CD4-positive, alpha-beta T cell (primary cell): ENCODE measurements at regions of chr7 and their contacts with region 1.

Region 1: DNA sequence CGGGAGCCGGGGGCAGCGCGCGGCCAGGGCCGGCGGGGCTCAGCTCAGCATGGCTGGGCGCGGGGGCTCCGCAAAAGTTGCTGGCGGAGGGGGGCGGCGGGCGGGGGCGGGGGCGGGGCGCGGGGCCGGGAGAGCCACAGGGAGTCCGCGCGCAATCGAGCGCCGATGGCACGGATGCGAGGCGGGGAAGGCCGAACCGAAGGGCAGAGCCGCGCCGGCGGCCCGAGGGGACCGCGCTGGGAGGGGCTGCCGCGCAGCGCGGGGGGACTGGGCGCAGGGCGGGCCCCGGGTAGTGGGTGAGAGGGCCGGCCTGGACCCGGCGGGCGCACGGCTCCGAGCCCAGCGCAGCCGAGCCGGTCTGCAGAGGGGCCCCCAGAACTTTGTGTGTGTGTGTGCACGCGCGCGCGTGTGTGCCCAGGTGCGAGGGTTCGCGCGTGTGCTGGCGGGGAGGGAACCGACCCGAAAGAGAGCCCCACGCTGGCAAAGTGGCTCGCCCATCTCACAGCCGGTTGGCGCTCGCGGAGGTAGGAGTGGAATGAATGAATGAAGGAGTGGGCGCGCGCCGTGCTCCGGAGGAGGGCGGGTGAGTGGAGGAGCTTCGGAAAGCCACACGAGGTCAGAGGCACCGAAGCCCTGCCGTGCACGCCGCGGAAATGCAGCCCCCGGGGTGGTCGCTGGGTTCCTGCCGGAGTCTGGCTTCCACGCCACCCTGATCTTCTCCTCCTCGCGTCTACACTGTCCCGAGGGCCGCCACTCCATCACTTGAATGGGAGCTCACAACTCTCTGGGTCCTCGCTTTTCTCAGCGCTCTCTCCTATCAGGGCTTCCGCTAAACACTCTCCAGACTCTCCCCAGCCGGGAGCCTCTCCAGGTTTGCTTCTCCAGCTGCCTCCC is at the start of gene HIPK2:
- DNase-seq: peak; percentile 48 to 89 (median 64)
- ATAC-seq: peak; percentile 59
- H3K4me3 ChIP-seq: peak within 1 kb of the TSS; percentile 87
- H3K4me3 Mint-ChIP-seq: peak within 1 kb of the TSS; percentile 99
- H3K27ac ChIP-seq: peak within 1 kb of the TSS; percentile 71 to 80
- H3K27ac Mint-ChIP-seq: peak within 1 kb of the TSS; percentile 93
- H3K4me1 ChIP-seq: peaks cover 30% of the 10 kb centered on the region
- H3K4me1 Mint-ChIP-seq: peaks cover 48% of the 10 kb centered on the region
- H3K27me3 ChIP-seq: peaks cover 0 to under 1% of the 10 kb centered on the region in 2 experiments
- H3K27me3 Mint-ChIP-seq: no peaks in the 10 kb centered on the region
- CTCF ChIP-seq: no peak
- total RNA-seq, gene HIPK2: 36.5 to 37.0 TPM

Region 2: DNA sequence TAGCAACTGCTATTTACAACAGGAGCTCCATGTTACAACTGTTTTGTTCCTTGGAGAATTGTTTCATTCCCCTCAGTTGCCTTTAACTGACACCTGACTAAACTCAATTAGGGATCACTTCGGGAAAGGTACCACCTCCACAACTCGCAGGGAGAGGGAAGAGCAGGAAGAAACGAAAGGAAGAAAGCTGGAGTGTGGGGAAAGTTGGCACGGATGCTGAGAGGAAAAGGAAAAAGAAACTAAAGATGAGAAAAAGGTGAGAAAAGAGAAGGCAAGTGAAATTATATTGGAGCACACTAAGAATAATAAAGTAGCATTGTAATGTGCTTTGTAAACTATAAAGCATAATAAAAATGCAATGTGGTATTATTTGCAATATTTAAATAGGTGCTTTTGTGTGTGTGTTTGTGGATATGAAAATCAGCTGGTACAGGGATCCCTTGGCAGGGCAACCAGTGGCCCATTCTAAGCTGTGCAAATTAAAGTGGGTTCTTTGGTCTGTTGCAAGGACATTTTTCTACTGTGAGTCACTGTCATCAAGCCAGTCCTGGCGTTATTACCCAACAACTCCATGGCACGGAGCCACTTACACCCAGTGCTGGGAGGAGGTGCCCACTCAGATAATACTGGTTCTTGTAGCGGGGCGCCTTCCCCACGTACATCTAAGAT is 46.3 kb before region 1 on chr7:
- CTCF ChIA-PET with region 1: no interaction called
- POLR2A ChIA-PET with region 1: interaction called, 23 read pairs
- intact Hi-C with region 1: loop called in 1 of 2 experiments (anchors 5 kb)
- DNase-seq: peak in 2 of 14 experiments; percentile 56 to 62
- ATAC-seq: no peak
- H3K4me3 ChIP-seq: no peak overlapping the region
- H3K4me3 Mint-ChIP-seq: peak overlapping the region; percentile 54
- H3K27ac ChIP-seq: no peak overlapping the region
- H3K27ac Mint-ChIP-seq: peak overlapping the region; percentile 79
- H3K4me1 ChIP-seq: peaks cover 47% of the 10 kb centered on the region
- H3K4me1 Mint-ChIP-seq: peaks cover 76% of the 10 kb centered on the region
- H3K27me3 ChIP-seq: no peaks in the 10 kb centered on the region
- H3K27me3 Mint-ChIP-seq: no peaks in the 10 kb centered on the region
- CTCF ChIP-seq: no peak

Region 3: GRCh38 chr7:139767561-139767982 is 10.6 kb before region 1 on chr7:
- CTCF ChIA-PET with region 1: no interaction called
- POLR2A ChIA-PET with region 1: interaction called, 41 read pairs
- intact Hi-C with region 1: loop called in 1 of 2 experiments (anchors 1 kb)
- DNase-seq: peak in 4 of 14 experiments; percentile 18 to 79 (median 60)
- ATAC-seq: peak; percentile 76
- H3K4me3 ChIP-seq: no peak overlapping the region
- H3K4me3 Mint-ChIP-seq: peak overlapping the region; percentile 21
- H3K27ac ChIP-seq: peak overlapping the region; percentile 75 to 84
- H3K27ac Mint-ChIP-seq: peak overlapping the region; percentile 86
- H3K4me1 ChIP-seq: peaks cover 60% of the 10 kb centered on the region
- H3K4me1 Mint-ChIP-seq: peaks cover 94% of the 10 kb centered on the region
- H3K27me3 ChIP-seq: no peaks in the 10 kb centered on the region
- H3K27me3 Mint-ChIP-seq: no peaks in the 10 kb centered on the region
- CTCF ChIP-seq: no peak

Region 4: DNA sequence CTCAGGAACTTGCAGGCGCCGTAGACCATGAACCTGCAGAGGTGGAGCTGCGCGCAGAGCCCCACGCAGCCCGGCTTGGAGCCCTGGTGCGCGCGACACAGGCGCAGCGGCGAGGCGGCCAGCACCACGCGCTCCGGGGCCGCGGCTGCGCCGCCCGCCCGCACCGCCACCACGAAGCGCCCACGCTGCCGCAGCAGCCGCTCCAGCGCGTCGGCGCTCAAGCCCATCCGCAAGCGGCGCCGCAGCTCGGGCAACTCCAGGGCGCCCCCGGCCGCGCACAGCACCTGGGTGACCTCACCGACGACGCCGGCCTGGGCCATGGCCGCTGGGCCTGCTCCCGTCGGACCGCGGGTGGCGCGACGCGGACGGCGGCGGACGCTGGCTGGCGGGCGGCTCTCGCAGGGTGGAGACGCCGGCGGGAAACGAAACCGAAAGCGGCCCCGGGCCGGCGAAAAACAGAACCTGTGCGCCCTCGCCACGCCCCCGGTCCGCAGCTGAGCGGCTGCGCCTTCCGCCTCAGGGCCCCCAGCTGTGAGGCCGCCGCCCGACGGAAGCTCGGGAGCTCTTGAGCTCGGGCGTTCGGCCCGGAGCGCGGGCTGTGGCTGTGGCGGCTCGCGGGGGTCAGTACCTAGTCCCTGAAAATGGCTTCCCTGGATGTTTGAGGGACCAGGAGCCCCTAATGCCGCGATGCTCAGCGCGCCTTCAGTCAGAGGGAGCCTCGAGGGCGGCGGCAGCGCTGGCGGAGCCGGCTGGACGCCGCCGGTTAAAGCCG is 284.5 kb after region 1 on chr7 and contains the start of gene PARP12:
- CTCF ChIA-PET with region 1: no interaction called
- POLR2A ChIA-PET with region 1: interaction called, 3 read pairs
- intact Hi-C with region 1: loop called in 1 of 2 experiments (anchors 5 kb)
- DNase-seq: peak; percentile 71 to 94 (median 86)
- ATAC-seq: peak; percentile 67
- H3K4me3 ChIP-seq: peak within 1 kb of the TSS; percentile 71
- H3K4me3 Mint-ChIP-seq: peak within 1 kb of the TSS; percentile 85
- H3K27ac ChIP-seq: peak within 1 kb of the TSS; percentile 67 to 82
- H3K27ac Mint-ChIP-seq: peak within 1 kb of the TSS; percentile 83
- H3K4me1 ChIP-seq: peaks cover 49% of the 10 kb centered on the region
- H3K4me1 Mint-ChIP-seq: peaks cover 55% of the 10 kb centered on the region
- H3K27me3 ChIP-seq: no peaks in the 10 kb centered on the region
- H3K27me3 Mint-ChIP-seq: no peaks in the 10 kb centered on the region
- CTCF ChIP-seq: no peak
- total RNA-seq, gene PARP12: 76.7 to 78.5 TPM

Region 5: DNA sequence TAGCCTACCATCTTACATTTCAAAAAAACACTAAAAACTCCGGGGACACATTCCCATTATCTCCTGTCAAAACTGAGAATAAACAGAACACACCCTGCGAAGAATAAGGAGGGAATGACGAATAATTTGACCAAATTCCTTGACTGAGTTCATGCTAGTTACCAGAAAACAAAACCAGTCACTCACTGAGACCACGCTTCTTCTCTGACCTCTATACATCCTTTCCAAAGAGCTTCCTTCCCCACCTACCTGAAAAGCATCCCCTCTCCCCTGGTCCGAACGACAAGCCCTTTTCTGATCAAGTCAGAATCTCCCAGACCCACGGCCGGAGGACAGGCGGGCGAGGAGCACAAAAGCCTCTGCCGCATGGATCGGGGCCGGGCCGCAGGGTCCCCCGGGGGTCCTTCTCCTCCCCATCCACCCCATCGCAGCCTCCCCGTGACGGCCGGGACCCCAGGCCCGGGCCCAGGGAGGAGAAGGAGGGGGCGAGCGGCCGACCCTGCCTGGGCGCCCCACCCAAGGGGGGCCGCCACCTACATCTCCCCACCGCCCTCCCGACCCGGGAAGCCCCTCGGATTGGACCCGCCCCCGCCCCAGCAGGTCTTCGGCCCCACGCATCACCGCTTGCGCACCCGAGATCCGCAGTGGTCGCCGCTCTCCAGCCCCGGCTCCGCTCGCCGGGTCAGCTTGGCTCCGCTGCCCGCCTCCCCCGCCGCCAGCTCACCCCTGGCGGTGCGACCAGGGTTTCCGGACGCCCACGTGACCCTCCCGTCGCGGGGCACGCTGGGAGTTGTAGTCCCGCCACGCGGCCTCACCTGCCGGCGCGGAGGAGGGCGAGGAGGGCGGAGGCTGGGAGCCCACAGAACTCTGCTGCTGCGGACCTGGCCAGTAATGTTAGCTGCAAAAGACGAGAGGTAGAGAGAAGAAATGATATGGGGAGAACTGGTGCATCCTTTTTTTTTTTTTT is 619.9 kb after region 1 on chr7 and contains the start of gene SLC37A3:
- CTCF ChIA-PET with region 1: no interaction called
- POLR2A ChIA-PET with region 1: no interaction called
- intact Hi-C with region 1: loop called in 1 of 2 experiments (anchors 10 kb)
- DNase-seq: peak; percentile 75 to 91 (median 84)
- ATAC-seq: peak; percentile 98
- H3K4me3 ChIP-seq: peak within 1 kb of the TSS; percentile 79
- H3K4me3 Mint-ChIP-seq: peak within 1 kb of the TSS; percentile 86
- H3K27ac ChIP-seq: peak within 1 kb of the TSS in 1 of 2 donors; percentile 53
- H3K27ac Mint-ChIP-seq: peak within 1 kb of the TSS; percentile 64
- H3K4me1 ChIP-seq: peaks cover 22% of the 10 kb centered on the region
- H3K4me1 Mint-ChIP-seq: peaks cover 33% of the 10 kb centered on the region
- H3K27me3 ChIP-seq: no peaks in the 10 kb centered on the region
- H3K27me3 Mint-ChIP-seq: no peaks in the 10 kb centered on the region
- CTCF ChIP-seq: no peak
- total RNA-seq, gene SLC37A3: 23.5 to 25.6 TPM